ENCODE measurements at regions of chr16 and their contacts with region 1.

Region 1: DNA sequence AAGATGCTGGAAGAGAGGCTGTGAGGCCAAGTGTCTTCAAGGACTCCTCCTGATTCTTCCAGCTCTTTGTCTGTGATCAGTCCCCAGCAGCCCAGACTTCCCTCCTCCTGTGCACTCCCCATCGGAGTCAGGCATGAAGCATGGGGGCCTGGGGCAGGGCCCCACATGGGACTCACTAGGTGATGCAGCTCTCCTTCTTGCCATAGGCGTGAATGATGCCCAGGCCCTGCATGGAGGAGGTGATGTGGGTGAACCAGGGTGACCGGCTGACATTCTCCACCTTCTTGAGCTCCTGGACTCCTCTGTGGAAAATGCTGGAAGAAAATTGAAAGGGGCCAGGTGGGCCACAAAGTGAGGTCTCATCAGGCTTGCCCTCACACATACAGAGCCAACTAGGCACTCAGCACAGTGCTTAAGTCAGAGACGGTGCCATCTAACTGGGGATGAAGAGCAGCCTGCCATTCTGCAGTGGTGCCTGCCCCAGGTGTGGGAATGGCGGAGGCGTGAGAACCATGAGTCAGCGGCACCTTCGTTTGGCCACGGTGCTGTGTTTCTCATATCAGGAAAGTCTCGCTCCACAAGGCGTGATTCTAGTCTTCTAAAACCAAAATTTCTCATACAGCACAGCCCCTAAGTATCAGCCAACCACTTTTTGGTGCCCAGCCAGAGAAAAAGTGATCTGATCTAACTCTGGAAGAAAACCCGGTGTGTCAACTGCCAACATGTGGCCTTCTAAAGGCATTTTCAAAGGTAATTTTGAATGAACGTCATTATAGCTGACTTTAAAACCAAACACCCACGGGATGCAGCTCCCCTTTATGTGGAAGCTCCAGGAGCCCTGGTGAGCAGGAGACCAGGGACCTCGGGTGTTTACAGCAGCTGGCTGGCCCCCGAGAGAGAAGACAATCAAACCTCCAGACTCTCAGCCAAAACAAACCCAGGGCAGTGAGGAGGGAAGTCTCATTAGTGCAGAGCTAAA is 54.8 kb downstream of the ABCC12 start:
- DNase-seq: peak; percentile 78
- ATAC-seq: peak; percentile 89
- H3K4me3 Mint-ChIP-seq: no peak overlapping the region
- H3K27ac Mint-ChIP-seq: no peak overlapping the region
- H3K4me1 Mint-ChIP-seq: peaks cover 11% of the 10 kb centered on the region
- H3K27me3 Mint-ChIP-seq: peaks cover 21% of the 10 kb centered on the region

Region 2: DNA sequence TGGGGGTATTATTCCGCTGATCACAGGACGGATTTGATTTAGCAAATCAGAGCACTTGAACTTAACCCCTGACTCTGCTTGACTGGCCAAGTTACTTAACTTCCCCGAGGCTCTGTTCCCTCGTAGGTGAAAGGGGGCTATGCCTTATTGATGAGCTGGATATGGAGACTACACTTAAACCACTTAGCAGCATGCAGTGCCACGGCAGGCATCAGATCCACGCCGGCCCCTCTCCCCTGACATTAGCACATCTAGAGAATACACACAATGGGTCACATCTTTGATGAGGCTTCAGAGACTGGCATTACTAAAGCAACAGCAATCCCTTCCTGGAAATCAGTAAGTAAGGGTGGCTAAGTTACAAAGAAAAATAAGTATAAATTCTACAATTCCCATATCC is 16.2 kb before region 1 on chr16:
- CTCF ChIA-PET with region 1: no interaction called
- POLR2A ChIA-PET with region 1: no interaction called
- intact Hi-C with region 1: no loop called
- DNase-seq: no peak
- ATAC-seq: no peak
- H3K4me3 Mint-ChIP-seq: no peak overlapping the region
- H3K27ac Mint-ChIP-seq: no peak overlapping the region
- H3K4me1 Mint-ChIP-seq: no peaks in the 10 kb centered on the region
- H3K27me3 Mint-ChIP-seq: no peaks in the 10 kb centered on the region

Region 3: DNA sequence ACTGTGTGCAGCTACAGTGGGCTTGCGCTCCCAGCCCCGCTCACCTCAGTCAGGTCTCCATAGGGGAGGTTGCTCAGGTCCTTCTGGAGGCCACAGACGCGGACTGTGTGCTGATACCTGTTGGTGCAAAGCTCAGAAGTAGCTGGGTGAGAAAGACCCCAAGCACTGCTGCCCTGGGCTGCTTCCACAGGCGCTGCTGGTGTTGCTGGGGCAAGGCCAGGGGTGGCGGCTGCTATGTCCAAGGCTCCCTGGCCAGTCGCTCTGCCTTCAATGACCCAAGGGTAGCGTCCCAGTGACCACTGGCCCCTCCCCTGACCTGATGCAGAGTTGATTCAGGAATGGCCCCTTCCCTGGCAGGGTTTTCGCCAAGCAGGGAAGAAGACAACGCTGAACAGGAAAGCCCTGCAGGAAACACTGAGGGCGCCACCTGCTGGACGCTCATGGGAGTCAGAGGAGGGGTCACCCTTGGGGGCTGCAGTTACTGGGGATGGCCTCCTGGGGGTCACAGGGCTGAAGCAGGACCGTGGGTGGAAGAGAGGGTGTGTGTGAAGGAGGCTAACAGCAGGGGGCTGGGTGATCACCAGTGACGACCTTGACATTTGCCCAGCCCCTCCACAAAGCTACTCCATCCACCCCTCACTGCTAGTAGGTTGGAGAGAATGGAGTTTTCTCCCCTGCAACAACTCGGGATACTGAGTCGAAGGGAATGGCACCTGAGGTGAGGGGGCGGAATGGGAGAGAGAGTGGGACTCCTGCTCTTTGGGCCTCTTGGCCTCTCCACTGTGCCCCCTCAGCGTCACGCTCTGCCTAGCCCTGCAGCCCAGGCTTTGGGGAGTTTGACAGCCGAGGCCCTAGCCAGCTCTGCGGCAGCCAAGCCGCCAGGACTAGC is 16.5 kb after region 1 on chr16:
- CTCF ChIA-PET with region 1: interaction called, 3 read pairs
- POLR2A ChIA-PET with region 1: no interaction called
- intact Hi-C with region 1: loop called in 1 of 2 experiments (anchors 1 kb)
- DNase-seq: peak; percentile 68
- ATAC-seq: peak; percentile 65
- H3K4me3 Mint-ChIP-seq: no peak overlapping the region
- H3K27ac Mint-ChIP-seq: no peak overlapping the region
- H3K4me1 Mint-ChIP-seq: peaks cover 2% of the 10 kb centered on the region
- H3K27me3 Mint-ChIP-seq: peaks cover 21% of the 10 kb centered on the region

Region 4: DNA sequence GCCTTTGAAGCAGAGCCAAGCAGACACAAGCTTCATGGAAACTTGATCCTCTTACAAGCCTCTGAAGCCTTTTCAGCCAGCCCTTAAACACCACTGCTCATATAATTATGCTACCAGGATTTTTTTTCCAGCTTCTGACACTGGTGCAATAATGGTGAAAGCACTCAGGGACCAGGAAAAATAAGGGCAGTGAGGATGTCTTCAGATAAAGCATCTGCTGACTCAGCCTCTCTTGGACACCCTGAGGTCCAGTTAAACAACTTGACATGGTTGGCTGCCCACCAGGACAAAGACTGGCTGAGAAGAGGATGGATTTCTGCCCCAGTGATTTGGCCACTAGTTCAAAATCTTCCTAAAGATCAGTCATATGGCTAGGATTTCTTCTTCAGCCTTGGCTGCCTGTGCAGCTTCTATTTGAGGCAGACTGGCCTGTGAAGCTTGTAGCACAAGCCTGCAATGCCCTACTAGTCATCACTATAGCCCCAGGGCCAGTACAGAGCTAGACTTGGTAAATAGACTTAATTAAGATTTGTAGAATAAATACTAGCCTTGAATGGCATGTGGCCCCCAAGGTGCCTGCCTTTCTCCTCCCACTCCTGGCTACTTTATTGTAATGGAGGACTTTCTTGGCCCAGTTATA is 633.4 kb after region 1 on chr16:
- CTCF ChIA-PET with region 1: no interaction called
- POLR2A ChIA-PET with region 1: no interaction called
- intact Hi-C with region 1: no loop called
- DNase-seq: no peak
- ATAC-seq: no peak
- H3K4me3 Mint-ChIP-seq: no peak overlapping the region
- H3K27ac Mint-ChIP-seq: no peak overlapping the region
- H3K4me1 Mint-ChIP-seq: no peaks in the 10 kb centered on the region
- H3K27me3 Mint-ChIP-seq: no peaks in the 10 kb centered on the region